ENCODE measurements at regions of chr9 and their contacts with region 1.

Region 1: DNA sequence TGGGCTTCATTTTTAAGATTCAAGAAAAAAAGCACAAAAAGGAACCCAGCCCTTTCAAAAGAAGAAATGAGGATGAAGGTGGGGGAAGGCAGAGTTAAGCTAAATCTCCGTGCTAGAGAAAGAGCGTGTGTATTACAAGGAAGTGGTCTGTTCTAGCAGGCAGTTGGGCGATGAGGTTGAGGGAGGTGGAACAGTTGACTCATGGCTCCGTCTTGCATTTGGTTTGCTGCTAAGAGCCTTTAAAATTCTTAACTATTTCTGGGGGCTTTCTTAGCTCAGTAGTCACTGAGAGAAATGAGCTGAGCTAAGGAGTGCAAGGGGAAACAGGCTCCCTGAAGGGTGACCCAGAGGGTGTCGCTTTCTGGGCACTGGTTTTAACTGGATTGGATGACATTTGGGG is 117.4 kb downstream of the GCNT1 start:
- DNase-seq: peak; percentile 96
- ATAC-seq: peak; percentile 83
- H3K4me3 Mint-ChIP-seq: peak overlapping the region; percentile 19
- H3K27ac Mint-ChIP-seq: peak overlapping the region; percentile 93
- H3K4me1 Mint-ChIP-seq: peaks cover 56% of the 10 kb centered on the region
- H3K27me3 Mint-ChIP-seq: no peaks in the 10 kb centered on the region

Region 2: GRCh38 chr9:76086539-76086938 is 489.8 kb before region 1 on chr9:
- CTCF ChIA-PET with region 1: no interaction called
- DNase-seq: no peak
- ATAC-seq: no peak
- H3K4me3 Mint-ChIP-seq: no peak overlapping the region
- H3K27ac Mint-ChIP-seq: no peak overlapping the region
- H3K4me1 Mint-ChIP-seq: no peaks in the 10 kb centered on the region
- H3K27me3 Mint-ChIP-seq: no peaks in the 10 kb centered on the region

Region 3: GRCh38 chr9:76562511-76562911 is 13.8 kb before region 1 on chr9:
- CTCF ChIA-PET with region 1: interaction called, 34 read pairs
- DNase-seq: no peak
- ATAC-seq: peak; percentile 61
- H3K4me3 Mint-ChIP-seq: no peak overlapping the region
- H3K27ac Mint-ChIP-seq: peak overlapping the region; percentile 55
- H3K4me1 Mint-ChIP-seq: peaks cover 24% of the 10 kb centered on the region
- H3K27me3 Mint-ChIP-seq: peaks cover 3% of the 10 kb centered on the region

Region 4: DNA sequence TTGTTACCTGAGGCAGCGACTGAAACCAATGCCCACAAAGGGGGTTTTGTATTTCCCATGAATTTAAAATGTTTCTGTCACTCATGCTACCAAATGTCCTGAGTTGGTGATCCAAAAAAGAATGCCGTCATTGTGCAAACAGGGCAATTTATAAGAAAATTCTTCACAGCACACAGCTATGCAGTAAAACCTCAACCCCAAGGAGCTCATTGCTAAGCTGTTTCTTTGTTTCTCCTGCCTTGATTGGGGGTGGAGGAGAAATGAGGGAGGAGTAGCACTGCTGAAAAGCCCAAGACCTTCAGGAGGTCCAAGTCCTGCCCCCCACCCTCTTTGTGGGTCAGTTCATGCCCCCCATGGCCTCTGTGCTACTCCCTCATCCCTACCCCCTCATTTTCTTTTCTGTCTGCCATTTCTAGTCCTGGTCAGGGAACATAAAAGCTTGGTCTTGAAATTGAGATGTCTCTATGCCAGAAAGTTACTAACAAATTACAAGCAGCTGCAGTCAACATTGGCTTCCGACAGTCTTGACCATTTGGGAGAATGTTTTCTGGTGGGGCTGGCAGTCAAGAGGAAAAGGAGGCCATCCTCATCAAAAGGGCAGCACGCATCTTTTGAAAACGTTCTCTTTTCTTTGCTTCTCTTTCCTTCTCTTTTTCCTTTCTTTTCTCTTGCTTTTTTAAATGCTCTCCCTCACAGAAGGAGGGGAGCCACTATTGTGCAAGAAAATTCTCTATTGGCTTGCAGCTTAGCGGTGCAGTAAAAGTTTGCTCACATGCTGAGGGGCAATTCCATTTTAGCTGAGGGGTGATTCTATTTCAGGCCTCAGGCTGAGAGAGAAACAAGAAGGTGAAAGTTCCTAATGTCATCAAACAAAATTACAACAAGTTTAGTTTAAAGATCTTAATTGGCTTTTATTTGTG is 16.0 kb after region 1 on chr9:
- CTCF ChIA-PET with region 1: interaction called, 12 read pairs
- DNase-seq: no peak
- ATAC-seq: no peak
- H3K4me3 Mint-ChIP-seq: no peak overlapping the region
- H3K27ac Mint-ChIP-seq: no peak overlapping the region
- H3K4me1 Mint-ChIP-seq: peaks cover 29% of the 10 kb centered on the region
- H3K27me3 Mint-ChIP-seq: no peaks in the 10 kb centered on the region

Measured in activated CD8-positive, alpha-beta memory T cell treated with anti-CD3 and anti-CD28 coated beads, Interleukin-2, amount 10 ng/mL, durations not matched to agents 7 days and 5 days (primary cell).